Aorta (tissue), 5 donors: ENCODE measurements at regions of chr4 and their contacts with region 1.

Region 1: DNA sequence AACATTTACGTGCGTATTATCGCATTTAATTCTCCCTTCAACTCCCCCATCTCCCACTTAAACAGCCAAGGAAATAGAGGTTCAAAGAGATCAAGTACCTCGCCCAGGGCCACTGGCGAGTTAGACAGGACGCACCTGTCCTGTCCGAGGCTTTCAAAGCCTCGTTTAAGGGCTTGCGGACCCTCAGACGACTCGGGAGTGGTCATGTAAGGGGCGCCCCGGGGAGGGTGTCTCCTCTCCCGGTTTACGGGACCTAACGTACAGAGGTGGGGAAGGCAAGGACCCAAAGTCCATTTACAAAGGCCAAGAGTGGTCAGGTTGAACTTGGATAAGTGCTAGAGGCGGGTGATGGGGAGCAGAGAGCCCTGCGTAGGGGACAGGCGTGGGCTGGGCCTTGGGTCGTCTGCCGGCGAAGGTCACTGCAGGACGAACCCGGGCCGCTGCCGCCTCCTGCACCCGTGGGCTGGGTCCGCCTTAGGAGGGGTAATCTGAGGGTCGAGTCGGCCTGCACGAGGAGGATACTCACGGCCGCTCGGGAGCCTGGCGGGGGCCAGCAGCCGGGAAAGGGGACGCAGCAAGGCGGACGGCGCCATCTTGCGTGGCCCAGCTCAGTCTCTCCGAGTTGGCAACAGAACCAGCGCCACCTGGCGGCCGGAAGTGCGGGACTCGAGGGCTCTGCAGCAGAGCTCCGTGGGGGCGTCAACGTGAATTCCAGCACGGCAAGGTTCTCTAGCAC is 5.9 kb upstream of the NAA15 start:
- DNase-seq: peak; percentile 99 to 100
- ATAC-seq: peak; percentile 99
- H3K4me3 ChIP-seq: peak overlapping the region; percentile 42 to 95
- H3K27ac ChIP-seq: peak overlapping the region in 1 of 2 donors; percentile 25
- H3K4me1 ChIP-seq: no peaks in the 10 kb centered on the region
- H3K27me3 ChIP-seq: no peaks in the 10 kb centered on the region

Region 2: DNA sequence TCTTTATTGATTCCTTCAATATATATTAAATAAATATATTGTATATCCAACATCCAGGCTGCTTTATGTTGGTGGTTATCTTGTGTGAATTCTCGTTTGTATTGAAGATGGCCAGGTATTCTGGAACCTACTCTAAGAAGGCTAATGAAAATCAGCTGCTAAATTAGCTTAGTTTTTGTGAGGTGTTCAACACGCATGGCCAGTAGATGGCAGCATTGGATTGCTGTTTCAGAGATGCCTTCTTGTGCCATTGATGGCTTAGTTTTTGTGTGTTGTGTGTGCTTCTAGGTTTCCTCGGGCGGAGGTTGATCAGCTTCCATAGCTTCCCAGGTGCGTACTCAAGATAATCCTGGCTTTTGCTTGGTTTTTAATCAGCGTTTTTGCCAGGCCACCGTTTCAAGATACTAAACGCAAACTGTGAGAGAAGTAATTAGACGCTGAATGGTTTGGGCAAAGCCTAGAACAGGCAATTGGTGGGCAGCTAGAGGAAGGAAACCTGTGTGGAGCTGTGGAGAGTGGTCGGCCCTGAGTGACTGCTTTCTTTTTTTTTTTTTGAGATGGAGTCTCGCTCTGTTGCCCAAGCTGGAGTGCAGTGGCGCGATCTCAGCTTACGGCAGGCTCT is 264.6 kb before region 1 on chr4:
- intact Hi-C with region 1: loop called in 1 of 2 experiments (anchors 5 kb)
- DNase-seq: peak in 1 of 2 donors; percentile 68
- ATAC-seq: peak; percentile 82
- H3K4me3 ChIP-seq: no peak overlapping the region
- H3K27ac ChIP-seq: no peak overlapping the region
- H3K4me1 ChIP-seq: no peaks in the 10 kb centered on the region
- H3K27me3 ChIP-seq: no peaks in the 10 kb centered on the region

Region 3: DNA sequence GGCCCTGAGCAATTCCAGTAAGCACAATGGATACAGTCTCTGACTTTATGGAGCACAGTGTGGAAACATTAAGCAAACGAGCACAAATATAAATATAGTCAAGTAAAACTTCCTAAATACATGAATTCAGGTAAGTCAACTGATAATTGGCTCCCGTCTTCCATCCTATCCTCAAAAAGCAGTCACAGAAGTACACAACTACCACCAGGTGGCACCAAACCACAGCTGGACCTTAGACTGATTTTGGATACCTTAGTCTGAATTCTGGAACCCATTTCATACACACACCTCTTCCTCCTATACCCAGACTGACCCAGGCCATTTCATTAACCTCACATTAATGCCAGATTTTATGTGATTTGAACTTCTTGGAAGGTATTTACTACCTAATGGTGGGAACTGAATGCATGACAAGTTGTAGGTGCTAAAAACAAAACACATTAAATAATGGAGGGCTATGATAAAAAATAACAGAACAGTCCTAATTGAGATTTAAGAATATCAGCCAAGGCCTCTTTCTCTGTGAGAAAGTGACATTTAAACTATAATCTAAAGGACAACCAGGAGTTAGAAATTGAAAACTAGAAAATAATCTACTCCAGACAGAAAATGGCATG is 195.9 kb before region 1 on chr4:
- intact Hi-C with region 1: loop called (anchors 5 kb)
- DNase-seq: peak in 1 of 2 donors; percentile 79
- ATAC-seq: peak; percentile 82
- H3K4me3 ChIP-seq: no peak overlapping the region
- H3K27ac ChIP-seq: no peak overlapping the region
- H3K4me1 ChIP-seq: no peaks in the 10 kb centered on the region
- H3K27me3 ChIP-seq: no peaks in the 10 kb centered on the region

Region 4: DNA sequence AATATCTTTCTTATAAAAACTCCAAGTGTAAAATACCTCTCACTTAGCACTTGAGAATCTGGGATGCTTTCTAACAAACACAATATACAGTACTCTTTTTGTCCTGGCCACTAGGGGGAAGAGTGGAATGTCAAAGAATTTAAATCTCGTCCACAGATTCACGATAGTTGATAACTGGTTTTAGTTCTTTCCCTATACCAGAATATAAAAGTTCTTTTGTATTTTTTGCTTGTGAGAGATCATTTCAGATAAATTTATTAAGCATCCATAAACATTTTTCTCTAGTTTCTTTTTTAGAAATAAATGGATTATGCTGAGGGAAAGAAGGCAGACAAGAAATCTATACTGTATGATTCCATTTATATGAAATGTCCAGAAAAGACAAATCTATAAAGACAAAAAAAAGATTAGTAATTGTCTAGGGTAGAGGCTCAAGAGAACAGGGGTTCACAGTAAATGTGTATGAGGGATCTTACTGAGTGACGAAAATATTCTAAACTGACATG is 65.8 kb before region 1 on chr4:
- intact Hi-C with region 1: loop called (anchors 1 to 2 kb)
- DNase-seq: no peak
- ATAC-seq: peak; percentile 79
- H3K4me3 ChIP-seq: no peak overlapping the region
- H3K27ac ChIP-seq: no peak overlapping the region
- H3K4me1 ChIP-seq: no peaks in the 10 kb centered on the region
- H3K27me3 ChIP-seq: no peaks in the 10 kb centered on the region

Region 5: GRCh38 chr4:139243448-139244365 is 51.7 kb before region 1 on chr4:
- intact Hi-C with region 1: loop called in 1 of 2 experiments (anchors 5 kb)
- DNase-seq: peak in 1 of 2 donors; percentile 57
- ATAC-seq: peak; percentile 92
- H3K4me3 ChIP-seq: no peak overlapping the region
- H3K27ac ChIP-seq: peak overlapping the region in 1 of 2 donors; percentile 84
- H3K4me1 ChIP-seq: peaks cover 3% of the 10 kb centered on the region in 2 donors
- H3K27me3 ChIP-seq: no peaks in the 10 kb centered on the region